ENCODE measurements at regions of chr15 and their contacts with region 1.

Region 1: DNA sequence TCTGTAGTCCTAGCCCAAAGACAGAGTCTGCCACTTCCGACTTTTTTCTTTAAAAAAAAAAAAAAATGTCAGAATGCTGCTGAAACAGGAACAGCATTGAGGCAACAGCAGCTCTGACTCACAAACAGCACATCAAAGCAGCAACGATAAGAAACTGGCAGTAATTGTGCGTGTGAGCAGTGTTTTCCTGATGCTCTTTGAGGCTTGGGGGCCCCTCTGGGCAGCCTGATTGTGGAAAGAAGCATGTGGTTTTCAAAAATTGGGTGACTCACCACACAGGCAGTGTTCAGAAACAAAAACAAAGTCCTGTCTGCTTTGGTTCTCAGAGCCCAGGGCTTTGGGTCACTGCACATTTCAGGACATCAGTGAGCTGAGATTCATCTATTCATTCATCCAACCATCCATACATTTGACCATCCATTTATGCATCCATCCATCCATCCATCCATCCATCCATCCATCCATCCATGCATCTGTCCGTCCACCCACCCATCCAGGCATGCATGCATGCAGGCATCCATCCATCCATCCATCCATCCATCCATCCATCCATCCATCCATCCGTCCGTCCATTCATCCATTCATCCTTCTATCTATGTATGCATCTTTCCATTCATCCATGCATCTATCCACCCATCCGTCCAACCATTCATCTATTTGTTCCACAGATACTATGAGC is 308.4 kb downstream of the RPLP1 start:
- DNase-seq: peak; percentile 89
- H3K4me3 Mint-ChIP-seq: peak overlapping the region; percentile 49
- H3K27ac Mint-ChIP-seq: peak overlapping the region; percentile 87
- H3K4me1 Mint-ChIP-seq: peaks cover 69% of the 10 kb centered on the region
- H3K27me3 Mint-ChIP-seq: peaks cover 15% of the 10 kb centered on the region

Region 2: GRCh38 chr15:69468241-69469121 is 292.5 kb before region 1 on chr15:
- CTCF ChIA-PET with region 1: no interaction called
- POLR2A ChIA-PET with region 1: interaction called, 12 read pairs
- DNase-seq: peak; percentile 88
- H3K4me3 Mint-ChIP-seq: peak overlapping the region; percentile 43
- H3K27ac Mint-ChIP-seq: peak overlapping the region; percentile 87
- H3K4me1 Mint-ChIP-seq: peaks cover 29% of the 10 kb centered on the region
- H3K27me3 Mint-ChIP-seq: peaks cover 33% of the 10 kb centered on the region

Region 3: DNA sequence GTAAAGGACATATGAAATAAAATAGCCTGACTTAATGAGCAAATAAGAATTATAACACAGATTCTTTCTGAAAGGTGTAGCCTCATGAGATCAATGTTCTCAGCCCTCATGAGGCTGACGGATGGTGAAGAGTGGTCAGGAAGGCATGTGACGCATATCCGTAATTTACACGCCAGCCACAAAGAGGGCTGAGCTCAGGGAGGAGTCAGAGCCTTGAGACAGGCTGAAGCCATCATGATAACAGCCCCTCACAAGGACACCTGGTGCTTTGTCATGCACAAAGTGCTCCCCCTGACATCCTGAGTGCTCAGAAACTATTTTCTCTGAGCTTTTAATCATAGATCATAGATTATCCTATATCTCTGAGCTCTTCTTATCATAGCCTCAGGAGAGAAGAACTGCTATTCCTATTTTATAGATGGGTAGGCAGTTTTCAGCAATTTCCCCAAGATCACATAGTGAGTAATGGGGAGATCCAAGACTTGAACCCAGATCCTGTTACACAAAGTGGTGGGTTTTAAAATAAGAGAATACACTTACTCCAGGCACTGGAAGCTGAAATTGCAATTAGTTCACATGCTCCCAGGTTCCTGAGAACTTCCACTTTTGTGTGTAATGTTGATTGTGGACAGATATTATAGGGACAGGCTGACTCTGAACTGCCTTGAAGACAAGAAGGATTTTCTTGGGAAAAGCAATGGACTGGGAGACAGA is 41.3 kb before region 1 on chr15:
- CTCF ChIA-PET with region 1: interaction called, 5 read pairs
- POLR2A ChIA-PET with region 1: interaction called, 38 read pairs
- DNase-seq: peak; percentile 75
- H3K4me3 Mint-ChIP-seq: no peak overlapping the region
- H3K27ac Mint-ChIP-seq: peak overlapping the region; percentile 23
- H3K4me1 Mint-ChIP-seq: peaks cover 70% of the 10 kb centered on the region
- H3K27me3 Mint-ChIP-seq: peaks cover 56% of the 10 kb centered on the region